HepG2 (cell line): ENCODE measurements at regions of chr17 and their contacts with region 1.

Region 1: GRCh38 chr17:19992803-19993713 is 15.4 kb upstream of the AKAP10 start:
- DNase-seq: peak; percentile 89
- ATAC-seq: peak; percentile 98
- H3K4me3 ChIP-seq: peak overlapping the region; percentile 15 to 60 (median 54); a peak in 3 of 6 replicates
- H3K27ac ChIP-seq: no peak overlapping the region
- H3K4me1 ChIP-seq: peaks cover 7% of the 10 kb centered on the region; the same call in 1 of the 2 replicates
- H3K27me3 ChIP-seq: peaks cover 0 to under 1% of the 10 kb centered on the region in 2 experiments; a peak in 2 of 5 replicates
- CTCF ChIP-seq: peak; percentile 89
- EP300 ChIP-seq: no peak
- POLR2A ChIP-seq: no peak
- RAD21 ChIP-seq: peak; percentile 87

Region 2: GRCh38 chr17:19977311-19978208 is 15.5 kb before region 1 on chr17 and contains the start of gene AKAP10:
- CTCF ChIA-PET with region 1: no interaction called
- POLR2A ChIA-PET with region 1: interaction called, 12 read pairs
- in situ Hi-C with region 1: no loop called
- intact Hi-C with region 1: no loop called
- DNase-seq: peak; percentile 76
- ATAC-seq: peak; percentile 94
- H3K4me3 ChIP-seq: peak within 1 kb of the TSS; percentile 83 to 89 (median 84)
- H3K27ac ChIP-seq: peak within 1 kb of the TSS; percentile 87
- H3K4me1 ChIP-seq: peaks cover 28% of the 10 kb centered on the region
- H3K27me3 ChIP-seq: no peaks in the 10 kb centered on the region; a peak in 1 of 5 replicates
- CTCF ChIP-seq: no peak
- EP300 ChIP-seq: peak in 1 of 2 experiments; percentile 32; a peak in 2 of 4 replicates
- POLR2A ChIP-seq: peak; percentile 68 to 75
- RAD21 ChIP-seq: no peak
- total RNA-seq, gene AKAP10: 17.4 and 17.6 TPM in 2 replicates

Region 3: GRCh38 chr17:20095336-20096080 is 102.5 kb after region 1 on chr17:
- CTCF ChIA-PET with region 1: interaction called, 5 read pairs
- POLR2A ChIA-PET with region 1: interaction called, 4 read pairs
- in situ Hi-C with region 1: loop called (anchors 10 kb)
- intact Hi-C with region 1: loop called (anchors 1 kb)
- DNase-seq: peak; percentile 43
- ATAC-seq: peak; percentile 98
- H3K4me3 ChIP-seq: no peak overlapping the region
- H3K27ac ChIP-seq: no peak overlapping the region
- H3K4me1 ChIP-seq: no peaks in the 10 kb centered on the region
- H3K27me3 ChIP-seq: peaks cover 6 to 37% of the 10 kb centered on the region in 2 experiments; a peak in 4 of 5 replicates
- CTCF ChIP-seq: peak; percentile 70
- EP300 ChIP-seq: no peak
- POLR2A ChIP-seq: no peak
- RAD21 ChIP-seq: no peak

Region 4: DNA sequence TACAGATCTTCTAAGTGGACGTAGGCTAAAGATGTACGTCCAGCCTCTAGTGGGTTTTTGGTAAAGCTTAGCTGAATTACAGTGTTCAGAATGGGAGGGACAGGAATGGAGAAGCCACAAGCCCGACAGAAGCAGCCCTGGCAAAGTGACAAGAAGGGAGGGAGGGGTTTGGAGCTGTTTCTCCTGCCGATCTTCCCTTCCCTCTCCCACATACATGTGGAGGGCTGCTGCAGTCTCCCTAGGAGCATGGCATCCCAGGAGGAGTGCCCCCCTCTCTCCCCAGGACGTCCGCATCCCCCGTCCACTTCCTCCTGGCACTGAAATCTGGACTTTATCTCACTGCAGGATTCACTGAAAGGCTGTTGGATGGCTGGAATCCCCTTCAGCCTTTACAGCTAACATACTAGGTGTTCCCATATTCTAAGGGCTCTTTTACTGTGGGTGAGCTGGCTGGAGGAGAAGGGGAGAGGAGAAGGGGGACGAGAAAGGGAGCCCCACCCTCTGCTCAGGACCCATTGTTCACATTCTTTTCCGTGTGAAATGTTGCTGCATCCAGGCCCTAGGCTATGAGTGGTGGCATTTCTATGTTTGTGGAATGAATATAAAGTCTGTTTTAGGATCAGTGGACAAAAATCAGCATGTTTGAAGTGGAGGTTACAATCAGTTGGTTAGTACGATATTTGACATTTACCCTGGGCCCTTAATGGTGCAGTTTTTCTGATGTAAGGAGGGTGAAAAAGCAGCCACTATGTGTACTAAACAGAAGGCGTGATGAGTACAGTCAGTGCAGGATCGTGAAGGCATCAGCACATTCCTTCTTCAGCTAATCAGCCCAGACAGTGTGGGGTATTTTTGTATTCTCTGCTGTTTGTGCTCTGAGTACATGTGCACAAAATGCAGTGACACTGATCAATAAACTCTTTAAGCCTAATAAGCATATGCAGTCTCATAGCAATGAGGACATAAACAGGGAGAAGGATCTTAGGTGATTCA is 110.7 kb after region 1 on chr17:
- CTCF ChIA-PET with region 1: no interaction called
- POLR2A ChIA-PET with region 1: no interaction called
- in situ Hi-C with region 1: loop called (anchors 10 kb)
- intact Hi-C with region 1: no loop called
- DNase-seq: no peak
- ATAC-seq: no peak
- H3K4me3 ChIP-seq: no peak overlapping the region
- H3K27ac ChIP-seq: no peak overlapping the region
- H3K4me1 ChIP-seq: no peaks in the 10 kb centered on the region
- H3K27me3 ChIP-seq: peaks cover 0 to 24% of the 10 kb centered on the region in 2 experiments; a peak in 2 of 5 replicates
- CTCF ChIP-seq: no peak
- EP300 ChIP-seq: no peak
- POLR2A ChIP-seq: no peak
- RAD21 ChIP-seq: no peak

Region 5: DNA sequence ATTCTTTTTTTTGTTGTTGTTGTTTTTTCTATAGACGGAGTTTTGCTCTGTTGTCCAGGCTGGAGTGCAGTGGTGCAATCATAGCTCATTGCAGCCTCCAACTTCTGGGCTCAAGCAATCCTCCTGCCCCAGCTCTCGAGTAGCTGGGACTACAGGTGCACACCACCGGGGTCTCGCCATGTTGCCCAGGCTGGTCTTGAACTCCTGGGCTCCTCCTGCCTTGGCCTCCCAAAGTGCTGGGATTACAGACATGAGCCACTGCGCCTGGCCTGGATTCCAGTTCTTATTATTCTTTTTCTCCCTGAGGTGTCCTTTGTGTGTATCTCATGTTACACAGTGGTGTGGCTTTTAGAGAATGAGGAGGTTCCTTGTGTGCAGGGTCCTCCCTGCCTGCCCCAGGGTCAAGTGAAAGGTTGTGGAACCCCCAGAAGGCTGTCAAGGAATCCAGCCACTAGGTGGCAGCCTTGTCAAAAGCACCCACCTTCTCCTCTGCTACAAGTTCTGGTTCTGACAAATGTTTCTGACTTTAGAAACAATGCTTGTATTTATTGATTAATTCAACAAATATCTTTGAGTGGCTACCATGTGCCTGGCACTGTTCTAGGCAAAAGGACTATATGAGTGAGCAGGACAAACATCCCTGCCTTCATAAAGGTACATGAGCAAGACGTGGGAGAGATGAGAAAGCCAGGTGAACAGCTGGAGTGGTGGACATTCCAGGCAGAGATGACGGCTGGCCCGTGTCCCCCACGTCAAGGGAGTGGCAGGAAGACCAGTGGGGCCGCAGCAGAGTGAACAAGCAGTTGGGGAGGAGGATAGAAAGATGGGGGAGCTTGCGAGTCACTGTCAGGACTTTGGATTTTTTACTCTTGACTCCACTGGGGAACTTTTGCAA is 128.5 kb after region 1 on chr17:
- CTCF ChIA-PET with region 1: interaction called, 27 read pairs
- POLR2A ChIA-PET with region 1: no interaction called
- in situ Hi-C with region 1: no loop called
- intact Hi-C with region 1: loop called (anchors 1 kb)
- DNase-seq: peak; percentile 50
- ATAC-seq: peak; percentile 86
- H3K4me3 ChIP-seq: no peak overlapping the region
- H3K27ac ChIP-seq: no peak overlapping the region
- H3K4me1 ChIP-seq: no peaks in the 10 kb centered on the region
- H3K27me3 ChIP-seq: no peaks in the 10 kb centered on the region; a peak in 1 of 5 replicates
- CTCF ChIP-seq: peak; percentile 83
- EP300 ChIP-seq: no peak
- POLR2A ChIP-seq: no peak
- RAD21 ChIP-seq: peak; percentile 55; the same call in 1 of the 2 replicates

Region 6: DNA sequence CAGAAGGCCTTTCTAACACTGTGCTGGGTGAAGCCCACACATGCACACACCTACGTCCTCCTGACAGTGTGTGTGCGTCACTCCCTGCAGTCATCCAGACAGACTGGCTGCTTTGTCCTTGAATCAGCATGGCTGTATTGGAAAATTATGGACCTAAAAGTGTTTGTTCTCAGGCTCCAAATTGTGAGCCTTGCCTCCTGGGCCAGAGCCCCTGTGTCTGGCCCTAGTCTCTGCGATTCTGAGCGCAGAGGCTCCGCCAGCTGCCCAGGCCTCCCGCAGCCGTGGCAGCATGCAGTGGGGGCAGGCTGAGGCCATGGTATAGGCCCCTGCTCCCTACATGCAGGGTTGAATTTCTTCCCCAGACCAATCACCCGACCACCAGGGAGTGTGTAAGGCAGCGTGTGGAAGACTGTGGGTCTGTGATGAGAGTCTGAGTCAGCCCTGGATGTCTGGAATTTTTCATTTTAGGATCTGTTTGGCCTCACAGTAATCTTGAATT is 307.4 kb after region 1 on chr17:
- CTCF ChIA-PET with region 1: no interaction called
- POLR2A ChIA-PET with region 1: no interaction called
- in situ Hi-C with region 1: loop called (anchors 25 kb)
- intact Hi-C with region 1: no loop called
- DNase-seq: no peak
- ATAC-seq: no peak
- H3K4me3 ChIP-seq: no peak overlapping the region
- H3K27ac ChIP-seq: no peak overlapping the region
- H3K4me1 ChIP-seq: no peaks in the 10 kb centered on the region
- H3K27me3 ChIP-seq: no peaks in the 10 kb centered on the region
- CTCF ChIP-seq: no peak
- EP300 ChIP-seq: no peak
- POLR2A ChIP-seq: no peak
- RAD21 ChIP-seq: no peak